ENCODE measurements at regions of chr3 and their contacts with region 1.

Region 1: DNA sequence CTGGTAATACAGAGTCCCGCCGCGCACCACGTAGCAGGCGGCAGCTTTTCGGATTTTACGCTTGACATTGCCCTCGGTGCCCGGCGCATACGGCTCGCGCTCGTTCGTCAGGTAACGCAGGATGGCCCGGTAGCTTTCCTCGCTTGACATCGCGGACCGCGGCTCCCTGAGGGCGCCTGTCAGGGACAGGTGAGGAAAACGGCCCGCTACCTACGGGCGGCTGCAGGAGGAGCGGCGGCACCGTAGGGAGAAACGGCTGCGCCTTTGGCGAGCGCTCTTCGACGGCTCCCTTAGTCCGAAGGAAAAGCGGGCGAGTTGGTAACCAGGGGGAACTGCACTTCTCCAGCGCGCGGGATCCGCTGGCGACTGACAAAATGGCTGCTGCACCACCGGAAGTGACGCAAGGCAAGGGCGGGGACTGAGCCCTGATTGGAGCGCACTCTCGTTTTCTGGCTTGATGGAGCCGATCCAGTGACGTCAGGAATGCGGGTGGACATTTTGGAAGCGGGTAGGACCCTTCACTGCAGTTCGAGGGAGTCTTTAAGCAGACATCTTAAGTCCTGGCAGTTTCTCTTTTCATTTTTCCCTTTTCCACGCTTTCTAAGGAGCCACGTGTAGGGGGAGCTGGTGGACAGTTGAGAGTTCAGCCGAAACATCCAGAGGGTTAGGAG is at the start of gene ZBTB11:
- DNase-seq: peak; percentile 100
- total RNA-seq, gene ZBTB11: 12.2 to 15.5 TPM

Region 2: GRCh38 chr3:101414121-101414520 is 262.8 kb before region 1 on chr3:
- intact Hi-C with region 1: no loop called
- DNase-seq: no peak

Region 3: DNA sequence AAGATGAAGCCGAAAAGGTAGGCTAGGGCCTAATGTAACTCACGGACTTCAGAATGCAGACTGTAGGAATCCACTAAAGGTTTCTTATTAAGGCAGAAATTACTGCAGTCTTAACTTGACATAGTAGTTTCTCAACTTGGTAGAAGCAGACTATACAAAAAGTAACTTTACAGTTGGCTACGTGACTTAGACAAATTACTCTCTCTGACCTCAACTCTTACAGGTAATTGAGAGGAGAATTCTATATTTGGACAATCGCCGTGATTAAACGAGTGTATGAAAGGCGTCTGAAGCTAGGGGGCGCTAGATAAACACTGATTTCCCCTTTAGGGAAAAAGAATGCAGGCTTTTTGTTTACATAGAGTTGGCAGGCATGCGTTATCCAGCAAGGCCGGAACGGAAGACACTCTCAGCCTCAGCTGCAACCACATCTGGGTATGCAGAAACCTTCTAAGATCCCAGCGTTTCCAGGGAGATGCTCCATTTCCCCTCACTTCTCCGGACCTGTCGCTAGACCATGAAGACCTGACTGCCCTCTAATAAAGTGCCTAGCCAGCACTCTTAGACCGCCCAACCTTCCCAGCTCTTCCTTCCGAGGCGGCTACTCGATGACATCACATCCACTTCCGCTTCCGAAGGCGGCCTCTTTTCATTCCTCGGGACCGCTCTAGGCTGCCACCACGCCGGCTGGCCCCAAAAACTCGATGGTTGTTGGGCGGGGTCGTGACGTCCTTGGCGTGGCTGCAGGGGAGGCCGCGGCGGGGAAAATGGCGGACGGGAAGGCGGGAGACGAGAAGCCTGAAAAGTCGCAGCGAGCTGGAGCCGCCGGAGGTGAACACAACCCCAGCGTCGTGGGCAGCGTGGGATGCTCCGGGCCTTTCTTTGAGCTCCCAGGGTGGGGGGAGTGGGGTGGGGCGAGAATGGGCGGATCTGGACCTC is 103.2 kb before region 1 on chr3 and contains the start of gene PCNP:
- intact Hi-C with region 1: loop called in 1 of 2 experiments (anchors 10 kb)
- DNase-seq: peak; percentile 100
- total RNA-seq, gene PCNP: 184 to 223 TPM

Measured in posterior vena cava (tissue), 2 donors.